Common myeloid progenitor, CD34-positive (primary cell): ENCODE measurements at regions of chr16 and their contacts with region 1.

Region 1: GRCh38 chr16:4330277-4330874 is 14.5 kb downstream of the GLIS2 start:
- DNase-seq: peak in 2 of 3 donors; percentile 57
- H3K4me3 ChIP-seq: no peak overlapping the region
- H3K27ac ChIP-seq: no peak overlapping the region
- H3K4me1 ChIP-seq: peaks cover 0 to 28% (median 19%) of the 10 kb centered on the region in 4 experiments
- H3K27me3 ChIP-seq: no peaks in the 10 kb centered on the region

Region 2: GRCh38 chr16:4200000-4200780 is 130.2 kb before region 1 on chr16:
- CTCF ChIA-PET with region 1: interaction called, 13 read pairs
- POLR2A ChIA-PET with region 1: no interaction called
- DNase-seq: peak; percentile 66 to 72 (median 66)
- H3K4me3 ChIP-seq: peak overlapping the region in 2 of 7 experiments; percentile 15 to 33
- H3K27ac ChIP-seq: no peak overlapping the region
- H3K4me1 ChIP-seq: peaks cover 0 to 9% (median 7%) of the 10 kb centered on the region in 4 experiments
- H3K27me3 ChIP-seq: no peaks in the 10 kb centered on the region

Region 3: DNA sequence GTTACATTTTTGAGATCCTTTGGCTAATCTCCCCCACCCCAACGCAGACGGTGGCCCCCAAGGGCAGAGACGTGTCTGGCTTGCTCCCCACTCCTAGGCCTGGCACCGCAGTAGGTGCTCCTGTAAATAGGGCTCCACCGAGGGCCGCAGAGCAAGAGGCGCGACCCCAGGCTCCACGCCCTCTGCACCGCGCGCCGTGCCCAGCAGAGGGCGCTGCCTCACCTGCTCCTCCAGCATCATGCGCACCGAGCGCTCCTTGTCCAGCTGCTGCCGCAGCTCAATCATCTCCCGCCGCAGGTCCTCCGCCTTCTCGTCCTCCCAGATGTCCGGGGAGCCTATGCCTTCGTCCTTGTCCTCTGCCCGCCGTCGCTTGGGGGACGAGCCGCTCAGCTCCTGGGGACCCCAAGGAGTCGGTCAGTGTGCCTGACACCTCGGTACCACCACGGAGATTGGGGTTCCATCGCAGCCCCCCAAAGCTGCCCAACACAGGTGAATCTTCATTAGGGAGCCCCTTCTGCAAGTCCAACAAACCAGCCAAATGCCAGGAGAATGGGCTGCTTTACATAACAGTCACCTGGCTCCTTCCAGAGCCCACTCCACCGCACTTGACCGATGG is 68.7 kb before region 1 on chr16:
- CTCF ChIA-PET with region 1: interaction called, 10 read pairs
- POLR2A ChIA-PET with region 1: no interaction called
- DNase-seq: peak; percentile 18 to 40 (median 39)
- H3K4me3 ChIP-seq: no peak overlapping the region
- H3K27ac ChIP-seq: no peak overlapping the region
- H3K4me1 ChIP-seq: no peaks in the 10 kb centered on the region
- H3K27me3 ChIP-seq: no peaks in the 10 kb centered on the region

Region 4: GRCh38 chr16:4288148-4288921 is 42.0 kb before region 1 on chr16:
- CTCF ChIA-PET with region 1: interaction called, 132 read pairs
- POLR2A ChIA-PET with region 1: no interaction called
- DNase-seq: peak; percentile 50 to 69 (median 66)
- H3K4me3 ChIP-seq: peak overlapping the region in 1 of 7 experiments; percentile 38
- H3K27ac ChIP-seq: no peak overlapping the region
- H3K4me1 ChIP-seq: peaks cover 0 to 10% (median 3%) of the 10 kb centered on the region in 4 experiments
- H3K27me3 ChIP-seq: peaks cover 0 to 4% (median 0%) of the 10 kb centered on the region in 5 experiments

Region 5: GRCh38 chr16:4298761-4299522 is 31.4 kb before region 1 on chr16:
- CTCF ChIA-PET with region 1: interaction called, 188 read pairs
- POLR2A ChIA-PET with region 1: no interaction called
- DNase-seq: no peak
- H3K4me3 ChIP-seq: no peak overlapping the region
- H3K27ac ChIP-seq: no peak overlapping the region
- H3K4me1 ChIP-seq: peaks cover 0 to 8% (median 6%) of the 10 kb centered on the region in 4 experiments
- H3K27me3 ChIP-seq: peaks cover 0 to 5% (median 0%) of the 10 kb centered on the region in 5 experiments

Region 6: GRCh38 chr16:4307215-4308037 is 22.9 kb before region 1 on chr16:
- CTCF ChIA-PET with region 1: interaction called, 188 read pairs
- POLR2A ChIA-PET with region 1: interaction called, 3 read pairs
- DNase-seq: peak; percentile 94 to 97 (median 97)
- H3K4me3 ChIP-seq: peak overlapping the region; percentile 56 to 81 (median 77)
- H3K27ac ChIP-seq: peak overlapping the region; percentile 33 to 75
- H3K4me1 ChIP-seq: peaks cover 5 to 24% (median 15%) of the 10 kb centered on the region in 4 experiments
- H3K27me3 ChIP-seq: no peaks in the 10 kb centered on the region

Region 7: GRCh38 chr16:4315186-4316109 is 14.9 kb before region 1 on chr16 and contains the start of gene GLIS2:
- CTCF ChIA-PET with region 1: interaction called, 188 read pairs
- POLR2A ChIA-PET with region 1: no interaction called
- DNase-seq: peak in 1 of 3 donors; percentile 54
- H3K4me3 ChIP-seq: peak within 1 kb of the TSS; percentile 6 to 63 (median 49)
- H3K27ac ChIP-seq: no peak within 1 kb of the TSS
- H3K4me1 ChIP-seq: peaks cover 0 to 17% (median 16%) of the 10 kb centered on the region in 4 experiments
- H3K27me3 ChIP-seq: peaks cover 0 to 37% (median 17%) of the 10 kb centered on the region in 5 experiments